Dorsolateral prefrontal cortex (tissue), 120 donors: ENCODE measurements at regions of chrX and their contacts with region 1.

Region 1: DNA sequence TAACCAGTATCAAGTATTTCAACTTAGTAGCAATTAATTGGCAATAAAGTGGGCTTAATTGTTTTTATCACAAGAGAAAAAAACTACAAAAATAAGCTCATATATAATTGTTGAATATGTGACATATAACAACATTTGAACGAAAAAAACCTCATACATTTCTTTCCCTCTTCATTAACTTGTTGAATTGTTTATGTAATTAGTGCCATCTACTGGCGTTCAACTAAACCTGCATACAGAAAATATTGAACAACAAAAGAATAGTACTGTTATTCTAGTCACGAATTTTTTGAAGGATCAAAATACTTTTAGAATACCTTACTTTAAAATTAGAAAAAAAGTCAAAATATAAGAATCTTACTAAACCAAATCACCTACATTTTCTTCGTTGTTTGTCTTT is 586.5 kb upstream of the FTHL17 start:
- DNase-seq: no peak
- H3K4me3 ChIP-seq: no peak overlapping the region
- H3K27ac ChIP-seq: no peak overlapping the region
- H3K27me3 ChIP-seq: peaks cover 0 to 34% (median 0%) of the 10 kb centered on the region in 45 donors
- CTCF ChIP-seq: peak in 55 of 56 donors; percentile 44 to 82 (median 68)

Region 2: GRCh38 chrX:31036895-31037294 is 621.5 kb before region 1 on chrX:
- intact Hi-C with region 1: loop called in 1 of 2 experiments (anchors 5 kb)
- DNase-seq: peak in 5 of 10 donors; percentile 8 to 43 (median 34)
- H3K4me3 ChIP-seq: no peak overlapping the region
- H3K27ac ChIP-seq: no peak overlapping the region
- H3K27me3 ChIP-seq: peaks cover 0 to 84% (median 40%) of the 10 kb centered on the region in 45 donors
- CTCF ChIP-seq: peak; percentile 12 to 67 (median 52)

Region 3: GRCh38 chrX:31213941-31214340 is 444.4 kb before region 1 on chrX:
- intact Hi-C with region 1: loop called in 1 of 2 experiments (anchors 5 kb)
- DNase-seq: peak in 1 of 10 donors; percentile 22
- H3K4me3 ChIP-seq: no peak overlapping the region
- H3K27ac ChIP-seq: no peak overlapping the region
- H3K27me3 ChIP-seq: peaks cover 0 to 41% (median 3%) of the 10 kb centered on the region in 45 donors
- CTCF ChIP-seq: peak in 54 of 56 donors; percentile 13 to 61 (median 44)